GM10248 (cell line): ENCODE measurements at regions of chr11 and their contacts with region 1.

Region 1: DNA sequence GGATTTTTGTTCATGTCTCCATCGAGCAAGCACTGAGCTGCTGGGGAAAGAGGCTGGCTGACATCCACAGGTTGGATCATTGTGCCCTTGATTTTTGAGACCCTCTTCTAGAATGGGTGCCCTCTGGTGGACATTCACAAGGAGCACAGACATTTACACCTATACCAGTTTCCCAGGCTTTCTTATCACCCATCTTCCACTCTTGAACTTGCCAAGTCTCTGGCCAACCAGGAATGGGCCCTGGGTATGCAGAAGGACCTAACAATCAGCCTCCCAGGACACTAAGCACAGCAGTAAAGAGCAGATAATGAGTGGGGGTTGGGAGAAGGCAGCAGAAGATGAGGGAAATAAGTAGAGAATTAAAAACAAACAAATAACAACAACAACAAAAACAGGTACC is 5.7 kb upstream of the INTS4 start:
- DNase-seq: peak; percentile 64
- CTCF ChIP-seq: peak; percentile 65

Region 2: GRCh38 chr11:77776455-77776854 is 223.7 kb before region 1 on chr11:
- CTCF ChIA-PET with region 1: interaction called, 13 read pairs
- POLR2A ChIA-PET with region 1: no interaction called
- DNase-seq: no peak
- CTCF ChIP-seq: no peak

Region 3: GRCh38 chr11:78011301-78011700 is 11.1 kb after region 1 on chr11:
- CTCF ChIA-PET with region 1: interaction called, 16 read pairs
- POLR2A ChIA-PET with region 1: no interaction called
- DNase-seq: no peak
- CTCF ChIP-seq: no peak

Region 4: DNA sequence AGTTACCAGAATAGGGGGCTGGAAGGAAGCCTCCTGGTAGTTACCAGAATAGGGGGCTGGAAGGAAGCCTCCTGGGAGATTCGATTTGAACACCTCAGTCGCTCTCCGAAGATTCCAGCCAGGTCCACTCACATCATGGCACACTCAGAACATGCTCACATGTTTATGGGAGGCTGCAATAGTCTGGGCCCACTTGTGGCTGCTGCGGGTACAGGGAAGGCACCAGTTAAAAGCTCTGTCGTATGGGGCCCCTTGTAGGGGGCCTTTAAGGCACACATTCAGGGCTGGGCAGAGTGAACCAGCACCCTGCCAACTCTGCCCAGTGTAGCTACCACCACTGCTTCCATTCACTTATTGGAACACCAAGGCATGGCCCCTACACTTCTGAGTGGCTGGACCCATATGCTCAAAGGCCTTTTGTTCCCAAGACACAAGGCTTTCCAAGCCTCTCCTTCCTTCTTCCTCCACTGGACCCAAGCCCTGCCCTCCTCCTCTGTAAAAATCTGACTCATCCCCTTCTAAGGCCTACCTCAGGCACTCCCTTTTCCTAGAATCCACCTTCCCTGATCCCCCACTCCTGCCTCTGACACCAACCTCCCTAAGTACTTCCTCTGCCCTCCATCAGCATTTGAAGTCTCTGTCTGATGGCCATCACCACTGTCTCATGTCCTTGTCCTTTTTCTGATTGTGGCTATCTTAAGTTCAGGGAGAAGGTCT is 216.5 kb after region 1 on chr11:
- CTCF ChIA-PET with region 1: no interaction called
- POLR2A ChIA-PET with region 1: no interaction called
- DNase-seq: no peak
- CTCF ChIP-seq: no peak